Transverse colon (tissue), 4 donors: ENCODE measurements at regions of chr1 and their contacts with region 1.

Region 1: DNA sequence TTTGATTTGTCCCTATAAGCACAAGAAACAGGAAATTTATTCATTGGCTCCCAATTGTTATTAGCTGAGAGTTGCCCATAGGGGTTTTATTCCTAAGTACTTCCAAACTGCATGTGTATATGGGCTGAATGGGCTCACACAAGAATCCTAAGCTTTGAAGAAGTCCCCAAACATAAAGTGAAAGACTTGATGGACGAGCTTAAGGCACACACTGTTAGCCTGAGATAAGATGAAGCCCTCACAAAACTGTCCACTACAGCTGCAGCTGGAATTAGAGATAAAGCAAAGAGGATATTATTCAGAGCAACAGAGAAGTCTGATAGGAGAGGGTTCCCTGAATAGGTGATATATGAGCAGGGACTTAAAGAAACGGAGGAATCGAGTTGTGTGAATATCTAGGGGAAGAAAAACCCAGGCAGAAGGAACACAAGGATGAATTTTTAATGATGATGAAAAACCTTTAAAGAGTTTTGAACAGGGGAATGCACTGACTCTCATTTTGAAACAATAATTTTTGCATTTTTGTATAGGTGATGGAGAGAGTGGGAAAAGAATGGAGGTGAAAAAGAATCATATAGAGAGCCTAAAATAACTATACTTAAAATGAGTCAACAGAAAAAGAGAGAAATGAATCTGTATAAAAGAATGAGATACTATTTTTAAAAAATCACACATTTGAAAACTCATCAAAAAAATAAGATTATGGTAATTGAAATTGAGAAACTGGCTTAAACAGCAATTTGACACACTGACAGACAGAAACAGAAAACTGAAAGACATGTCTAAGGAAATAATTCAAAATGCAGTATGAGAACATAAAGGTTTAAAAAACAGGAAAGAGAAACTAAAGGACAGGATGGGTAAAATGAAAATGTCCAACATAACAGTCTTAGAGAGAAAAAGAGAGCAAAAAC is 133.6 kb upstream of the POGK start:
- DNase-seq: no peak
- H3K4me3 ChIP-seq: no peak overlapping the region
- H3K27ac ChIP-seq: no peak overlapping the region
- H3K4me1 ChIP-seq: no peaks in the 10 kb centered on the region
- H3K27me3 ChIP-seq: no peaks in the 10 kb centered on the region
- CTCF ChIP-seq: no peak
- EP300 ChIP-seq: no peak
- POLR2A ChIP-seq: no peak

Region 2: DNA sequence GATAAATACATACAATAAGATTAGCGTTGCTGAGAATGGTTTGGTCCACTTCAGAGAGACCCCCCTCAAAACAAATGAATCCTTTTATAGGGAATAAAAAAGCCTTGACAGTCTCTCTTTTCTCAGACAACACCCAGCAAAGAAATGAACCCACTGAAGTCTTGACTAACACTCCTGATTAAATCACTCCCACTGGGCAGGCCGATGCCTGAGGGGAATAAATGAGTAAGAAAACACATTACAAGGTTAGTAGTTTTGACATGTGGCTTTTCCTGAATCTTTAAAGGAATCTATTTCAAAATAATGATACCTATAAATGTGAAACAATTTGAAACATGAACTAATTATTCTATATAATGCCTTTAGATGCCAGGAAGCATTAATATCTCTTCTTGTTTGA is 13.3 kb before region 1 on chr1:
- in situ Hi-C with region 1: no loop called
- intact Hi-C with region 1: loop called (anchors 2 kb)
- DNase-seq: no peak
- H3K4me3 ChIP-seq: no peak overlapping the region
- H3K27ac ChIP-seq: no peak overlapping the region
- H3K4me1 ChIP-seq: no peaks in the 10 kb centered on the region
- H3K27me3 ChIP-seq: no peaks in the 10 kb centered on the region
- CTCF ChIP-seq: no peak
- EP300 ChIP-seq: no peak
- POLR2A ChIP-seq: no peak